Activated naive CD4-positive, alpha-beta T cell treated with anti-CD3 and anti-CD28 coated beads for 36 hours (primary cell): ENCODE measurements at regions of chr3 and their contacts with region 1.

Region 1: DNA sequence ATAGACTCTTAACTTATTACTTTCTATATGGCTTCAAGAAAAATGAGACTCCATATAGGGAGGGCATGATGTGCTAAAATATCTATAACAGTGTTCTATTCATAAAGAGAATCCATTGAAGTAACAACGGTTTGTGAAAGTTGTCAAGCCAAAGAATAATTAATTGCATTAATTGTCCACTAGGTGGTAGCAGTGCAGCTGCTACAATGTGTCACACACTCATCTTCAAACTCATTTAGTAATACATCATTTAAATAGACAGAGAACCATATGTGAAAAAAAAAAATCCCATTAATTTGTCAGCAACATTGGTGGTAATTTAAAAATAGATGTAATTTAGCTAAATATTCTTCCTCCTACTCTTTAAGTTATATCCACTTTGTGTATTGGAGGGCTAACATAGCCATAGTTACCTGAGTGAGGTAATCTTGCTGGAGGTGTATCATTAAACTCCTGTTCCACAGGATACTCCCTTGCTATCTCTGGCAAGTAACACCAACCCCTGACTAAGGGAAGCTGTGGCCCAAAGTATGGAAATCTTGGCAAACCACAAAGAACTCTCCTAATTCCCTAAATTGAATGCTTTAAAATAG is 3.7 kb upstream of the CPA3 start:
- DNase-seq: peak; percentile 6
- H3K4me3 Mint-ChIP-seq: no peak overlapping the region
- H3K27ac Mint-ChIP-seq: no peak overlapping the region
- H3K4me1 Mint-ChIP-seq: no peaks in the 10 kb centered on the region
- H3K27me3 Mint-ChIP-seq: peaks cover 8% of the 10 kb centered on the region

Region 2: DNA sequence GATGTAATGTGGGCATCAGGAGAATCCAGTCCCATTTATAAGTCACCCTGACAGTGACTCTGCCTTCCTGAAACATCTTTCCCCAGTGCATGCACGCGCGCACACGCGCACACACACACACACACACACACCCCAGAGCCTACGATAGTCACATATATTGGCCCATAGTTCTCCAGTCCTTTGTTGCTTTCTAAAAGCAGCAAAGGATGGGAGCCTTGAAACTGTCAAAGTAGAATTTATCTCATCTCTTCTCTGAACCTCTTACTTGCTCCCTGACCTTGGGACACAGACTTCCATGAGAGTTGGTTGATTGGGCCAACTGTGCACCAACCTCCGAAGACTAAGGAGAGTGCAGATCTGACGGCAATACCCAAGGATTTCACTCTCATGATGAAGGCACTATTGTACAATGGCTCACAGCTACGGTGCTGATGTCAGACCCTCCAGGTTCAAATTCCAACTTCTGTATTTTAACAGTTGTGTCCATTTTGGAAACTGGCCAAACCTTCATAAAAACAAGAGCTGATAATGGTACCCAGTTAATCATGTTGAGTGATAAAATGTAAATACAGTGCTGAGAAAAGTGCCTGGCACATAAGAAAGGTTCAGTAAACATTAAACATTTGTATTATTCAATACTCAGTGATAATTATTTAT is 12.0 kb after region 1 on chr3:
- CTCF ChIA-PET with region 1: interaction called, 10 read pairs
- intact Hi-C with region 1: no loop called
- DNase-seq: no peak
- H3K4me3 Mint-ChIP-seq: no peak overlapping the region
- H3K27ac Mint-ChIP-seq: no peak overlapping the region
- H3K4me1 Mint-ChIP-seq: no peaks in the 10 kb centered on the region
- H3K27me3 Mint-ChIP-seq: peaks cover 2% of the 10 kb centered on the region

Region 3: DNA sequence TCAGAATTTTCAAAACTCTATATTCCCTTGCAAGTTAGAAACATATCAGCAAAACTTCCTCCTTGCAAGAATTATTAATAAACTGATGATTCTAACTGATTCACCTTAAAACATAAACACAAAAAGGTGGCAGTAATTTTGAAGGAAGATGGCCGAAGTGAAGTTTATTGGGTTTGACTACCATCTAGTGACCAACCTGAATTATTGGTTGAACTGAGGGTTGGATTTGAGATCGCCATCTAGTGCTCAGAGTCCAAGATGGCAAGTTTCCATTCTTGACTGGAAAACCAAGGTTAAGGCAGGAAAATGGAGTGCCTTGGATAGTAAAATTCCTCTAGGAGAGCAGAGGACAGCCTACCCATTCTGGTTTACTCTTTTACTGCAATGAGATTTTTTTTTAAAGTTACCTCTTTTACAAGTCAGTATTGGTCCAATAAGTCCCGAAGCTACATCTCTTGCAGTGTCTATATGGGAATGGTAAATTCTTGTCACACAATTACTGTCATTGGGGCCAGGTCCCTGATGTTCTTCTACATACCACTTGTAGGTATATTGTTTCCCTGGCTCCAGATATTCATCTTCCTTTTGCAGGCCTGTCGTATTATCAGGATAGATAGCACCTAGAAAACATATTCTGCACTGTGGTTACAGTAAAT is 411.9 kb after region 1 on chr3:
- CTCF ChIA-PET with region 1: no interaction called
- intact Hi-C with region 1: loop called (anchors 1 kb)
- DNase-seq: peak; percentile 34
- H3K4me3 Mint-ChIP-seq: no peak overlapping the region
- H3K27ac Mint-ChIP-seq: no peak overlapping the region
- H3K4me1 Mint-ChIP-seq: peaks cover 10% of the 10 kb centered on the region
- H3K27me3 Mint-ChIP-seq: no peaks in the 10 kb centered on the region